Activated CD4-positive, alpha-beta memory T cell treated with anti-CD3 and anti-CD28 coated beads for 36 hours (primary cell): ENCODE measurements at regions of chr1 and their contacts with region 1.

Region 1: DNA sequence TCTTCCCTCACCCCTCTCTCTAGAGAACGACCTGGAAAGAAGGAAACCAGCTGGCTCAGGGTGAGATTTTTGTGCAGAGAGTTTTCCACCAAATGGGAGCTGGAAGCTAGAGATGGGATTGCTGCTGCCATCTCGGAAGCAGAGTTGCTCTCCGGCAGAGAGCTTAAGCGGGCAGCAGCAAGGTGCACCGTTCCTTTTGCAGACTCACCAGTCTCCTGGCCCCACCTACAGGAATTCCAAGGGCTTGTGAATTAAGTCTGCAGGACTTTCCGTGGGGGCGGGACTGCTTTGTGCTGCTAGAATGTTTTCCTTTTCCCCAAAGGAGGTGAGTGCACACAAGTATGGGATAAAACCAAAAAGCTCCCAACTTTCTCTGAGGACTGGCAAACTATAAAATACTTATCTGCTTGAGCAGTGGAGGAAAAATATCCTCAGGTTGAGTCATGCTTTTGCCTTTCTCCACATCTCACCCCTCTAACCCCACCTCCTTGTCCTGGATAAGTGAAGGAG is 29.1 kb upstream of the KIAA0040 start:
- DNase-seq: no peak
- H3K4me3 Mint-ChIP-seq: no peak overlapping the region
- H3K27ac Mint-ChIP-seq: no peak overlapping the region
- H3K4me1 Mint-ChIP-seq: peaks cover 4% of the 10 kb centered on the region
- H3K27me3 Mint-ChIP-seq: no peaks in the 10 kb centered on the region

Region 2: DNA sequence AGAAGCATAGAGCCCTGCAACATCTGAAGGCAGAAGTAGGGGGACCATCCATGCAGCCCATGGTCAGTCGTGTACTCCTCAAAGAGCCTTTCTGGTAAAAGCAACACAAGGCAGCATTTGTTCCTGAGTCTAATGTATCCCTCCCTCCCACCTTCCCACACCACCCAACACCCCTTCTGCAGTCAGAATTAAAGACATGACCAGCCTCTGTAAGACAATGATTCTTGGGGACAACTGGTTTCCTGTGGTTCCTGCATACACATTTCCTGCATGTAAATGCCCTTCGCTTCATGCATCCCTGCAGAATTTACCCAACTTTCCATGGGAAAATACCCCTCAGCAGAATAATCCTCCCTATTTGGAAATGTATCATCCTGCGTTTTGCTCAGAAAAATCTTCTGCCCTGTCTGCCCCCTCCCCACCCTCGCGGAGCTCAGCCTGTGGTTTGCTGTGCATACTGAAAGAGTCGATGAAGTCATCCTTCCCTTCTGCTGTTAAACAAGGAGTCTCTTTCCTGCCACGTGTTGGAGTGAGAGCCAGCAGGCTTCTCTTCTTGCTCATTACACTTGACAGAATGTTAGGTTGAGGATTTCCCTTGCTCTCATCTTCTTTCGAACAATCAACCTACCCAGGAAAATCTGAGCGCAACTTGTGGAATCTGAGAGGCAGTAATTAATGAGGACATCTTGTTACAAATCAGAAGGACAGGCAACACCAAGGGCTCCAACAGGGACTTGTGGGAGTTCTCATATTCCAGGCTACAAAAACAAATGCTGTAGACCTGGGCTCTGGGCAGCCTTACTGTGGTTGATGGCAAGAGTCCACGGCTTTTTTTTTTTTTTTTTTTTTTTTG is 149.4 kb before region 1 on chr1:
- CTCF ChIA-PET with region 1: no interaction called
- POLR2A ChIA-PET with region 1: no interaction called
- intact Hi-C with region 1: no loop called
- DNase-seq: peak; percentile 62
- H3K4me3 Mint-ChIP-seq: no peak overlapping the region
- H3K27ac Mint-ChIP-seq: no peak overlapping the region
- H3K4me1 Mint-ChIP-seq: peaks cover 13% of the 10 kb centered on the region
- H3K27me3 Mint-ChIP-seq: peaks cover 23% of the 10 kb centered on the region

Region 3: GRCh38 chr1:175169305-175170018 is 52.3 kb before region 1 on chr1:
- CTCF ChIA-PET with region 1: no interaction called
- POLR2A ChIA-PET with region 1: no interaction called
- intact Hi-C with region 1: no loop called
- DNase-seq: no peak
- H3K4me3 Mint-ChIP-seq: no peak overlapping the region
- H3K27ac Mint-ChIP-seq: peak overlapping the region; percentile 6
- H3K4me1 Mint-ChIP-seq: peaks cover 49% of the 10 kb centered on the region
- H3K27me3 Mint-ChIP-seq: no peaks in the 10 kb centered on the region

Region 4: GRCh38 chr1:175287377-175287776 is 65.7 kb after region 1 on chr1:
- CTCF ChIA-PET with region 1: no interaction called
- POLR2A ChIA-PET with region 1: no interaction called
- intact Hi-C with region 1: loop called (anchors 10 kb)
- DNase-seq: peak; percentile 37
- H3K4me3 Mint-ChIP-seq: no peak overlapping the region
- H3K27ac Mint-ChIP-seq: no peak overlapping the region
- H3K4me1 Mint-ChIP-seq: peaks cover 13% of the 10 kb centered on the region
- H3K27me3 Mint-ChIP-seq: no peaks in the 10 kb centered on the region

Region 5: GRCh38 chr1:176000258-176000657 is 778.5 kb after region 1 on chr1:
- CTCF ChIA-PET with region 1: no interaction called
- POLR2A ChIA-PET with region 1: no interaction called
- intact Hi-C with region 1: no loop called
- DNase-seq: no peak
- H3K4me3 Mint-ChIP-seq: no peak overlapping the region
- H3K27ac Mint-ChIP-seq: no peak overlapping the region
- H3K4me1 Mint-ChIP-seq: peaks cover 2% of the 10 kb centered on the region
- H3K27me3 Mint-ChIP-seq: no peaks in the 10 kb centered on the region